ENCODE measurements at regions of chr2 and their contacts with region 1.

Region 1: DNA sequence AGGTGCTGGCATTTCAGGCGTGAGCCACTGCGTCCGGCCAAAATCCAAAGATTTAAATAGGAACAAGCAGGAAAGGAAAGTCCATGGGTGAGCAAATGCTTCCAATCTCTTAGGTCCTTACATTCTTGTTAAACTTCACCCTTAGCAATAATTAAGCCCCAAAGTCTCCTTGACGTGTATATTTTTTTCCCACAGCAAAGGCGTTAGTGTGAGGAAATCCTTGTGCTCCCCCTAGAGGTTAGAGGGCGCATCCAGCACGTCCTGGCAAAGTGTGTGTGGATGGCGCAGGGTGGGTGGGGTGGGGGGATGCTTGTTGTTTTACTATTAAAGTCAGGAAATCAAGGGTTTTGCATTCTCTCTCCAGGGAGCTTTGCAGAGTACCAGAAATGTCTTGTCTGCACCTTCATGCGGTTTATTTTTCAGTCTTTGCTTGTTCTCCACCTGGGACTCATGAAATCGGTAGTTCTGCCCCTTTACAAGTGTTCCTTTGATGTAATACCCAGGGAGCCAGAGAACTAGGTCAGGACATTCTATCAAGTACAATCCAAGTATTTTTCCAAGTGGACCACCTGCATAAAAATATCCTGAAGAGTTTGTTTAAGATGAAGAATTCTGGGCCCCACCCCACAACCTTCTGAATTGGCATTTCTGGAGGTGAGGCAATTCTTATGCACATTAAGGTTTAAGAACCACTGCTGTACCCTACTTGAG is 22.2 kb upstream of the ITSN2 start:
- DNase-seq: peak; percentile 79
- ATAC-seq: peak; percentile 93
- H3K4me3 ChIP-seq: no peak overlapping the region
- H3K4me3 Mint-ChIP-seq: no peak overlapping the region
- H3K27ac ChIP-seq: no peak overlapping the region
- H3K27ac Mint-ChIP-seq: no peak overlapping the region
- H3K4me1 ChIP-seq: no peaks in the 10 kb centered on the region
- H3K4me1 Mint-ChIP-seq: peaks cover 5% of the 10 kb centered on the region
- H3K27me3 ChIP-seq: no peaks in the 10 kb centered on the region
- H3K27me3 Mint-ChIP-seq: no peaks in the 10 kb centered on the region
- CTCF ChIP-seq: peak; percentile 84

Region 2: DNA sequence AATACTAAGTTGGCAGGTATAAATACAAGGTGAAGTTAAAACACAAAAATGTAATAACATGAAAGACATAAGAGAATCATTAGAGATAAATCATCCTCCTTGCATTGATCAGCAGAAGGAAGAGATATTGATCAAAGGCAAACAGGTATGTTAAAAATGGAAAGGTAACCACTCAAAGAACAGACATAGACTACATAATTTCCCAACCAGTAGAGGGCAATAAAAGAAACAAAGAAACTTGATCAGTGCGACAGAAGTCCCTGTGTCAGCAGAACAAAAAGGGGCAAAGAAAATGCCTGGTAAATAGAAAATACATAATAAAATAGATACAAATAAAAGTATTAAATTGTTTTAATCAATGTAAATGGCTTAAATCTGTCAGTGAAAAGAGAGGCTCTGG is 154.0 kb before region 1 on chr2:
- CTCF ChIA-PET with region 1: interaction called, 4 read pairs
- POLR2A ChIA-PET with region 1: no interaction called
- intact Hi-C with region 1: loop called (anchors 2 kb)
- DNase-seq: no peak
- ATAC-seq: no peak
- H3K4me3 ChIP-seq: no peak overlapping the region
- H3K4me3 Mint-ChIP-seq: no peak overlapping the region
- H3K27ac ChIP-seq: no peak overlapping the region
- H3K27ac Mint-ChIP-seq: no peak overlapping the region
- H3K4me1 ChIP-seq: no peaks in the 10 kb centered on the region
- H3K4me1 Mint-ChIP-seq: no peaks in the 10 kb centered on the region
- H3K27me3 ChIP-seq: no peaks in the 10 kb centered on the region
- H3K27me3 Mint-ChIP-seq: no peaks in the 10 kb centered on the region
- CTCF ChIP-seq: peak; percentile 19

Region 3: DNA sequence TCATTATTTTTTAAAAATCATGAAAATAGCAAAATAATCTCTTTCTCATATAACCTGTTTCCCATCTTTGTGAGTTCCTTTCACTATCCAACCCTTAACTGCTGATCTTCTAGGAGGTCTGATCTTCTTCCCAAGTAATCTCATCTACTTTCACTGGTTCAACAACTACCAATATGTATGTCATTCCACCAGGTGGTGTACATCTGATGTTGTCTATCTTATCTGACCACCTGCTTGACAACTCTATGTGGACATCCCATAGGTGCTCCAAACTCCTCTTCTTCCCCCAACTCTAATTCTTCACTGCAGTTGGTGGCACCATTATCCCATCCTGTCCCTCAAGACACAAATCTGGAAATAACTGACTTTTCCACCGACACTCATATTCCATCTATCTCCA is 145.2 kb before region 1 on chr2:
- CTCF ChIA-PET with region 1: no interaction called
- POLR2A ChIA-PET with region 1: no interaction called
- intact Hi-C with region 1: loop called (anchors 1 kb)
- DNase-seq: no peak
- ATAC-seq: no peak
- H3K4me3 ChIP-seq: no peak overlapping the region
- H3K4me3 Mint-ChIP-seq: no peak overlapping the region
- H3K27ac ChIP-seq: no peak overlapping the region
- H3K27ac Mint-ChIP-seq: peak overlapping the region; percentile 33
- H3K4me1 ChIP-seq: no peaks in the 10 kb centered on the region
- H3K4me1 Mint-ChIP-seq: no peaks in the 10 kb centered on the region
- H3K27me3 ChIP-seq: no peaks in the 10 kb centered on the region
- H3K27me3 Mint-ChIP-seq: no peaks in the 10 kb centered on the region
- CTCF ChIP-seq: no peak

Region 4: DNA sequence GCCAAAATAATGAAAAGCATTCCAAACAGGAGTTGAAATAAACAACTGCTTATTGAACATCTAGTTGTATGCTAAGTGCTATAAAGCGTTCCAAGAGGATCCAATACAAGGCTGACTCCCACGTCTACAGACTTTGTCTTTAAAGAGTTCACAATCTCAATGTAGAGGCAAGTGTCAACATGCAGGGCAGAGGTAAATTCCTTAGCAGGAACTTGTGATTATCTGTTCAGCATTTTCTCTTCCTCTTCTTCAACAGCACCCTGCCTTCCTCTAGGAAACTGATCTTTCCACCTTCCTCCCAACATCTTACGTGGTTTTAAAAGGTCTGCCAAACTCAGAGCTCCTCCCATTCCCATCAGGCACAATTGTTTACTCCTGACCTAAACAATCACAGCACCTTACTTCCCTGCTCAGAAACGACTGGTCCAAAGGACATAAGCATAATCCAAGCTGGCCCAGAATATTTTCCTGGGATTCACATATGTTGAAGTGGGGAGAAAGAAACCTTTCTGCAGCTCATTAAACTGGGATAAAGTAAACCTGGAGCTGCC is 106.1 kb before region 1 on chr2:
- CTCF ChIA-PET with region 1: interaction called, 5 read pairs
- POLR2A ChIA-PET with region 1: no interaction called
- intact Hi-C with region 1: loop called (anchors 5 kb)
- DNase-seq: no peak
- ATAC-seq: no peak
- H3K4me3 ChIP-seq: no peak overlapping the region
- H3K4me3 Mint-ChIP-seq: no peak overlapping the region
- H3K27ac ChIP-seq: peak overlapping the region in 1 of 2 donors; percentile 57
- H3K27ac Mint-ChIP-seq: peak overlapping the region; percentile 11
- H3K4me1 ChIP-seq: no peaks in the 10 kb centered on the region
- H3K4me1 Mint-ChIP-seq: peaks cover 11% of the 10 kb centered on the region
- H3K27me3 ChIP-seq: no peaks in the 10 kb centered on the region
- H3K27me3 Mint-ChIP-seq: no peaks in the 10 kb centered on the region
- CTCF ChIP-seq: no peak

Region 5: GRCh38 chr2:24297663-24298062 is 84.9 kb before region 1 on chr2:
- CTCF ChIA-PET with region 1: interaction called, 5 read pairs
- POLR2A ChIA-PET with region 1: no interaction called
- intact Hi-C with region 1: loop called (anchors 5 kb)
- DNase-seq: no peak
- ATAC-seq: no peak
- H3K4me3 ChIP-seq: no peak overlapping the region
- H3K4me3 Mint-ChIP-seq: no peak overlapping the region
- H3K27ac ChIP-seq: no peak overlapping the region
- H3K27ac Mint-ChIP-seq: no peak overlapping the region
- H3K4me1 ChIP-seq: no peaks in the 10 kb centered on the region
- H3K4me1 Mint-ChIP-seq: no peaks in the 10 kb centered on the region
- H3K27me3 ChIP-seq: no peaks in the 10 kb centered on the region
- H3K27me3 Mint-ChIP-seq: no peaks in the 10 kb centered on the region
- CTCF ChIP-seq: no peak

Region 6: GRCh38 chr2:24315669-24316068 is 66.8 kb before region 1 on chr2:
- CTCF ChIA-PET with region 1: no interaction called
- POLR2A ChIA-PET with region 1: no interaction called
- intact Hi-C with region 1: loop called (anchors 1 kb)
- DNase-seq: peak; percentile 60
- ATAC-seq: peak; percentile 86
- H3K4me3 ChIP-seq: no peak overlapping the region
- H3K4me3 Mint-ChIP-seq: peak overlapping the region; percentile 54
- H3K27ac ChIP-seq: peak overlapping the region; percentile 45 to 64
- H3K27ac Mint-ChIP-seq: peak overlapping the region; percentile 80
- H3K4me1 ChIP-seq: peaks cover 19 to 28% of the 10 kb centered on the region in 2 donors
- H3K4me1 Mint-ChIP-seq: peaks cover 49% of the 10 kb centered on the region
- H3K27me3 ChIP-seq: no peaks in the 10 kb centered on the region
- H3K27me3 Mint-ChIP-seq: no peaks in the 10 kb centered on the region
- CTCF ChIP-seq: no peak

Measured in B cell (primary cell).